ENCODE measurements at regions of chr5 and their contacts with region 1.

Region 1: GRCh38 chr5:38433160-38433861 is 123.1 kb downstream of the LIFR start:
- DNase-seq: no peak
- H3K4me3 ChIP-seq: no peak overlapping the region
- H3K27ac ChIP-seq: peak overlapping the region in 7 of 8 donors; percentile 9 to 59 (median 54)
- H3K4me1 ChIP-seq: peaks cover 0 to 32% (median 13%) of the 10 kb centered on the region in 6 donors
- H3K27me3 ChIP-seq: peaks cover 0 to 65% (median 0%) of the 10 kb centered on the region in 7 donors
- CTCF ChIP-seq: peak in 2 of 11 experiments; percentile 6 to 11
- POLR2A ChIP-seq: no peak

Region 2: GRCh38 chr5:38922199-38922598 is 488.9 kb after region 1 on chr5:
- intact Hi-C with region 1: loop called (anchors 10 kb)
- DNase-seq: no peak
- H3K4me3 ChIP-seq: no peak overlapping the region
- H3K27ac ChIP-seq: no peak overlapping the region
- H3K4me1 ChIP-seq: no peaks in the 10 kb centered on the region
- H3K27me3 ChIP-seq: peaks cover 0 to 21% (median 0%) of the 10 kb centered on the region in 7 donors
- CTCF ChIP-seq: peak in 10 of 11 experiments; percentile 37 to 75 (median 66)
- POLR2A ChIP-seq: no peak